ENCODE measurements at regions of chrX and their contacts with region 1.

Region 1: DNA sequence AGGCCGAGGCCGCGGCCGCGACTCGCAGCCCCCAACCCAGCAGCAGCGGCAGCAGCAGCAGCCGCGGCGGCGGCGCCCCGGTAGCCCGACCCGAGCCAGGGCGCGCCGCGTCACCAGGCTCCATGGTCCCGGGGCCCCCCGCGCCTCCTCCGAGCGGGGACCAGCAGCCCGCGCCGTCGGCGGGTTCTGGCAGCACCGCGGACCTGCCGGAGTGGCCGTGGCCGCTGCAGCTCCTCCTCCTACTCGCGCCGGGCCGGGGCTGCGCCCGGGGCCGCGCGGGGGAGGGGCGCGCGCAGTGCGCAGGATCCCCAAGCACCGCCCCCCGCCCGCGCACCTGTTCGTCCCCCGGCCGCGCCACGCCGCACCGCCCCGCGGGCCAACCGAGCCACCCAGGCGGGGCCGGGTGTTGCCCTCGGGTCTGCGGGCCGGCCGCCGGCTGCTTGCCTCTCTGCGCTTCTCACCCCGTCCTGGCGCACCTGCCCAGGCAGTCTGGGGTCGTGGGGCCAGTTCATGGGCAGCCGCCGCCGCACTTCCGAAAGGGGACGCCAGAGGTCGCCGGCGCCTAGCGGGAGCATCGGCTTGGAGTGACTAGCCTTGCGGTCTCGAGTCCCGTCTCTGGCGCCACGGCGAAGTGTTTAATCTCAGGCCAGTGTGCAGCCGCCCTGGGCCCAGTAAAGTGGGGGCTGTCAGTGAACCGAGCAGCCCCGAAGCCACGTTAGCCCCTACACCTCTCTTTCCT is at the start of gene SLC9A7:
- H3K4me3 Mint-ChIP-seq: peak within 1 kb of the TSS; percentile 76
- H3K27ac Mint-ChIP-seq: peak within 1 kb of the TSS; percentile 55
- H3K4me1 Mint-ChIP-seq: peaks cover 26% of the 10 kb centered on the region
- H3K27me3 Mint-ChIP-seq: peaks cover 5% of the 10 kb centered on the region

Region 2: GRCh38 chrX:46220822-46221221 is 538.3 kb before region 1 on chrX:
- intact Hi-C with region 1: no loop called
- H3K4me3 Mint-ChIP-seq: no peak overlapping the region
- H3K27ac Mint-ChIP-seq: no peak overlapping the region
- H3K4me1 Mint-ChIP-seq: no peaks in the 10 kb centered on the region
- H3K27me3 Mint-ChIP-seq: no peaks in the 10 kb centered on the region

Region 3: GRCh38 chrX:46796574-46797191 is 37.6 kb after region 1 on chrX:
- intact Hi-C with region 1: loop called (anchors 1 kb)
- H3K4me3 Mint-ChIP-seq: no peak overlapping the region
- H3K27ac Mint-ChIP-seq: no peak overlapping the region
- H3K4me1 Mint-ChIP-seq: peaks cover 11% of the 10 kb centered on the region
- H3K27me3 Mint-ChIP-seq: no peaks in the 10 kb centered on the region